ENCODE measurements at regions of chr16 and their contacts with region 1.

Region 1: DNA sequence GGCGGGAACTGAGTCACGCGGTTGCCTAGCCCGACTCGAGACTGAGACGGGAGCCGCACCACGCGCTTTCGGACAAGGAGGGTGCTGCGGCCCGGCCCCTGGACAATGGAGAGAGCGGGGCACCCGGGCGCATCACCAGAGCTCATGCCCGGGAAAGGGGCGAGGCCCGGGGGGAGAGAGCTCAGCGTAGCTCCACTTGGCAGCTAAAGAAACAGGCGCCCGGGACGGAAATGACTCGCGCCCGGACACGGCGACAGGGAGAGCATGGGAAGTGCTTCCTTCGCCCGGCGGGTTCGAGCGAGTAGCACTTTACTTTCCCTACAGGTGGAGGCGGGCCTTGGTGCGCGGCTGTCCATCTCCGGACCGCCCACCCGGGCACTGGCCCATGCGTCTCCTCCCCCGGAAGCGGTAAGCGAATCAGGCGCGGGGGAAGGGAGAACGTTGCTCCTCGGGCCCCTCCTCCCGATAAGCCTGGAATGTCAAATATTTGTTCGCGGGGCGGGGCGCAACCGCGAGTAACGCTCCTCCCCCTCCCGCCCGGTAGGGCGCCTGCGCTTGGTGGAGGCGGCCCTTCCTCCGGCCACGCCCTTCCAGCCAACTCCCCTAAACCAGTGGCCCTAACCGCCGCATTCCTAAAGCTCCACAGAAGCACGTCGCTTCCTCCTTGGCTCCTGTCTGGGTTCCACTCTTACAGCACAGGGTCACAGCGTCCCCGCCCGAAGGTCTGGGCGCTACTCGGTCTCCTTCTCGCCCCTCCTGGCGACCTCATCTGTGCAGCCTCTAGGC is 1.5 kb upstream of the ESRP2 start:
- DNase-seq: peak; percentile 98 to 99
- H3K4me3 ChIP-seq: peak overlapping the region; percentile 59 to 72 (median 68)
- H3K27ac ChIP-seq: peak overlapping the region; percentile 90 to 94
- H3K4me1 ChIP-seq: no peaks in the 10 kb centered on the region
- H3K27me3 ChIP-seq: no peaks in the 10 kb centered on the region
- CTCF ChIP-seq: peak in 1 of 3 donors; percentile 8
- POLR2A ChIP-seq: peak; percentile 35

Region 2: GRCh38 chr16:68085259-68086071 is 152.0 kb before region 1 on chr16 and contains the start of gene NFATC3:
- intact Hi-C with region 1: loop called (anchors 10 kb)
- DNase-seq: peak; percentile 98 to 99
- H3K4me3 ChIP-seq: peak within 1 kb of the TSS; percentile 75 to 95 (median 91)
- H3K27ac ChIP-seq: peak within 1 kb of the TSS; percentile 94 to 99
- H3K4me1 ChIP-seq: peaks cover 4 to 12% of the 10 kb centered on the region in 2 donors
- H3K27me3 ChIP-seq: no peaks in the 10 kb centered on the region
- CTCF ChIP-seq: no peak
- POLR2A ChIP-seq: no peak
- total RNA-seq, gene NFATC3: 52.0 to 64.2 (median 60.6) TPM

Region 3: DNA sequence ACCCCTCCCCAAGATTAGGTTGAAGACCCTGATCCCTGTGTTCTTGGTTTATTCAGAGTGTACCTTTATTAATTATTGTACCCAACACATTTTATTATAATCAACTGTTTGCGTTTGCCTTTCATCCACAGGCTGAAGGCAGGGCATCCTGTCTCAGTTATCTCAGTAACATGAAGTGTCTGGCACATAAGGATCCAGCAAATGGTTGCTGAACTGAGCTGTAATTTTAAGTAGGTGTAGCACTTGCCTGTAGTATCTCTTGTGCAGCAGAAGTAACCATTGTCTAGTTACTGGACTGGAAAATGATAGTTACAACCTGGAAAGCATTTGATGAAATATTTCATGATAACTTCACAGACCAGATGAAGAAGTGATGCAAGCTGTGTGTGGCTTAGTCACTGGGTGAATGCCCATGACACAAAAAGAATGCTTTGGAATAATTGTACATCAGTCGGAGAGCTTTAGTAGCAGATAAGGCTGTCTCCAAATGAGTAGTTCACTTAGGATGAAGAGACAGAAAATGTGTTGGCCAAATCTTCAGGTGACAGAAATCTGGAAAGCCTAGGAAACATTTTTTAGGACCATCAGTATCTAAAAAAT is 58.1 kb before region 1 on chr16:
- intact Hi-C with region 1: no loop called
- DNase-seq: no peak
- H3K4me3 ChIP-seq: no peak overlapping the region
- H3K27ac ChIP-seq: no peak overlapping the region
- H3K4me1 ChIP-seq: no peaks in the 10 kb centered on the region
- H3K27me3 ChIP-seq: no peaks in the 10 kb centered on the region
- CTCF ChIP-seq: no peak
- POLR2A ChIP-seq: no peak

Region 4: GRCh38 chr16:68257251-68257905 is 19.9 kb after region 1 on chr16:
- intact Hi-C with region 1: no loop called
- DNase-seq: no peak
- H3K4me3 ChIP-seq: no peak overlapping the region
- H3K27ac ChIP-seq: peak overlapping the region; percentile 52 to 72
- H3K4me1 ChIP-seq: no peaks in the 10 kb centered on the region
- H3K27me3 ChIP-seq: no peaks in the 10 kb centered on the region
- CTCF ChIP-seq: no peak
- POLR2A ChIP-seq: no peak

Region 5: DNA sequence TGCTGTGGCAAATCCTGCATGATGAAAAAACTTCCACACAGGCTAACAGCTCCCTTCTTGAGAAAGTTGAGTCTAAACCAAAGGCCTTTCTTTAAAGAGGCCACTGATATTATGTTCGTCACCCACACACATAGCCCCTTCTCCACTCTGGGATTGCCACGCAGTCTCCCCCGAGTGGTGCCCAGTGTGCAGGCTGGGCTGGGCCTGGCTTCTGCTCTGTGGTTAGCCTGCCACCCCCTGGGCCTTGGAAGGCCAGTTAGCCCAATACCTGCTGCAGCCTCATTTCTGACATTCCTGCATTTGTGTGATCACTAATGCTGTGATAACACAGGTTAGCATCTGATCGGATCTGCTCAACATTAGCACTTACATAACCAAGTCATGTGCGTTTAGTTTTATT is 452.5 kb after region 1 on chr16:
- intact Hi-C with region 1: no loop called
- DNase-seq: no peak
- H3K4me3 ChIP-seq: no peak overlapping the region
- H3K27ac ChIP-seq: no peak overlapping the region
- H3K4me1 ChIP-seq: no peaks in the 10 kb centered on the region
- H3K27me3 ChIP-seq: no peaks in the 10 kb centered on the region
- CTCF ChIP-seq: no peak
- POLR2A ChIP-seq: no peak